A673 (cell line): ENCODE measurements at regions of chr14 and their contacts with region 1.

Region 1: GRCh38 chr14:41201721-41202120 is 405.0 kb upstream of the LRFN5 start:
- DNase-seq: no peak
- H3K4me3 ChIP-seq: no peak overlapping the region
- H3K27ac ChIP-seq: no peak overlapping the region
- H3K4me1 ChIP-seq: no peaks in the 10 kb centered on the region
- H3K27me3 ChIP-seq: no peaks in the 10 kb centered on the region
- CTCF ChIP-seq: no peak

Region 2: DNA sequence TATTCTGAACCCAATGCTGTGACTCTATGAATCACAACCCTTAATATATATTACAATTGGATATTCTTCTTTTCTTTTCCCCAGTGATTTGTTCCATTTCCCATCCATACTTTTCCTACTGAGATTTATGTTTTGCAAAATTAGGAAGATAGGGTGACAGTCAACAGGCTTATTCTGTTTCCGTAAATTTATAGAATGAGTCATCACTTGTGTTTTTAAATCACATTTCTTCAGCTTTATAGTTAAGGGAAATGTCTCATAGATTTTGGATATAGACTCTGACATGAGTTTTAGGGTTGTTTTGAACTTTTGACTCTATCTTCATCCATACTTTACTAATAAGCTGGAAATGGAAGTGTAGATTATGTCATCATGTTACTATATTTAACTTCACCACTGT is 1107.9 kb before region 1 on chr14:
- CTCF ChIA-PET with region 1: no interaction called
- POLR2A ChIA-PET with region 1: no interaction called
- intact Hi-C with region 1: no loop called
- DNase-seq: no peak
- H3K4me3 ChIP-seq: no peak overlapping the region
- H3K27ac ChIP-seq: no peak overlapping the region
- H3K4me1 ChIP-seq: no peaks in the 10 kb centered on the region
- H3K27me3 ChIP-seq: no peaks in the 10 kb centered on the region
- CTCF ChIP-seq: no peak

Region 3: DNA sequence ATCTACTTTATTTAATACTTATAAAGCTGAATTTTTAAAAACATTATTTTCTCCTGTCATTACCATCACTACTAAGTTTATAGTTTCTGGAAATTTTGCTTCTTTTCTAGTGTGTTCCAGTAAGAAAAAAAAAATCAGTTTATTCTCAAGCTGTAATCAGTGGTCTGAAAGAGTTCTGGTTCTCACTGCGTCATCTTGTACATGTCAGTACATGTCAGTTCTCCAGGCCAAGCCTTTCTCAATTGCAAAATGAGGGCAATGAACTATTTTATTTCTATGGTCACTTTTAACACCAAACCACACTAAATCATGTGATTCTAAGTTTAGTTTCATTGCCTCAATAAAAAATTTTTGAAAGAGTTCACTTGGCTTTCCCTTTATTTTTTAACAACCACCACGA is 64.0 kb before region 1 on chr14:
- CTCF ChIA-PET with region 1: no interaction called
- POLR2A ChIA-PET with region 1: no interaction called
- intact Hi-C with region 1: loop called (anchors 2 kb)
- DNase-seq: no peak
- H3K4me3 ChIP-seq: no peak overlapping the region
- H3K27ac ChIP-seq: no peak overlapping the region
- H3K4me1 ChIP-seq: no peaks in the 10 kb centered on the region
- H3K27me3 ChIP-seq: no peaks in the 10 kb centered on the region
- CTCF ChIP-seq: no peak